Esophagus muscularis mucosa (tissue), 4 donors: ENCODE measurements at regions of chr2 and their contacts with region 1.

Region 1: GRCh38 chr2:180125245-180125962 is 118.3 kb upstream of the CWC22 start:
- DNase-seq: no peak
- H3K4me3 ChIP-seq: no peak overlapping the region
- H3K27ac ChIP-seq: no peak overlapping the region
- H3K4me1 ChIP-seq: peaks cover 0 to 16% (median 11%) of the 10 kb centered on the region in 4 donors
- H3K27me3 ChIP-seq: no peaks in the 10 kb centered on the region
- CTCF ChIP-seq: peak; percentile 53 to 65 (median 57)
- EP300 ChIP-seq: no peak
- POLR2A ChIP-seq: no peak

Region 2: DNA sequence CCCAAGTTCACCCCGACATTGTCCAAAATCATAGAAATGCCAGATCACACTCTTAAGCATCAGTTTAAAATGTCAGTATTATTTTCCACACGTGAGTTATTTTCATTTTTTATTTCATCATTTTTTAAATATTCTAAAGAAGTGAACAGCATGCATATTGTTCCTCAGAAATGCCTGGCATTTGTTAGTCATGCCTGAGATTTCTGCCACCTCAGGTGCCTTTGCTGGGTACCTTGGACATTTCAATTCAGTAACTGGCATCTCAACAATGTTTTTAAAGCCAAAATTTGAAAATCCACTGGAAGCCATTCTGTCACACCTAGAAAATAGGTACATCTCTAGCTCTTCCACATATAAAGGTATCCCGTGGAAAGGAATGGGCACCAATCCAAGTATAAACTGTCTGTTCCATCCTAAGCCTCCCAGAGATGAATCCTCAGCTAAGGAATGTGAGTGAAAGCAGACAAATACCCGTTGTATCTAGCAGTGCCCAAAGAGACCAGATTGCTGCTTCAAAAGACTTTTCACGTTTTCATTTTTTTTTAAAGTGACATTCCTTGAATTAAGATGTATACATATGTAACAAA is 423.8 kb before region 1 on chr2:
- intact Hi-C with region 1: no loop called
- DNase-seq: no peak
- H3K4me3 ChIP-seq: no peak overlapping the region
- H3K27ac ChIP-seq: no peak overlapping the region
- H3K4me1 ChIP-seq: peaks cover 0 to 8% (median 4%) of the 10 kb centered on the region in 4 donors
- H3K27me3 ChIP-seq: no peaks in the 10 kb centered on the region
- CTCF ChIP-seq: no peak
- EP300 ChIP-seq: no peak
- POLR2A ChIP-seq: no peak

Region 3: GRCh38 chr2:179917272-179917671 is 208.1 kb before region 1 on chr2:
- intact Hi-C with region 1: no loop called
- DNase-seq: no peak
- H3K4me3 ChIP-seq: no peak overlapping the region
- H3K27ac ChIP-seq: no peak overlapping the region
- H3K4me1 ChIP-seq: peaks cover 0 to 5% (median 0%) of the 10 kb centered on the region in 4 donors
- H3K27me3 ChIP-seq: no peaks in the 10 kb centered on the region
- CTCF ChIP-seq: no peak
- EP300 ChIP-seq: no peak
- POLR2A ChIP-seq: no peak

Region 4: DNA sequence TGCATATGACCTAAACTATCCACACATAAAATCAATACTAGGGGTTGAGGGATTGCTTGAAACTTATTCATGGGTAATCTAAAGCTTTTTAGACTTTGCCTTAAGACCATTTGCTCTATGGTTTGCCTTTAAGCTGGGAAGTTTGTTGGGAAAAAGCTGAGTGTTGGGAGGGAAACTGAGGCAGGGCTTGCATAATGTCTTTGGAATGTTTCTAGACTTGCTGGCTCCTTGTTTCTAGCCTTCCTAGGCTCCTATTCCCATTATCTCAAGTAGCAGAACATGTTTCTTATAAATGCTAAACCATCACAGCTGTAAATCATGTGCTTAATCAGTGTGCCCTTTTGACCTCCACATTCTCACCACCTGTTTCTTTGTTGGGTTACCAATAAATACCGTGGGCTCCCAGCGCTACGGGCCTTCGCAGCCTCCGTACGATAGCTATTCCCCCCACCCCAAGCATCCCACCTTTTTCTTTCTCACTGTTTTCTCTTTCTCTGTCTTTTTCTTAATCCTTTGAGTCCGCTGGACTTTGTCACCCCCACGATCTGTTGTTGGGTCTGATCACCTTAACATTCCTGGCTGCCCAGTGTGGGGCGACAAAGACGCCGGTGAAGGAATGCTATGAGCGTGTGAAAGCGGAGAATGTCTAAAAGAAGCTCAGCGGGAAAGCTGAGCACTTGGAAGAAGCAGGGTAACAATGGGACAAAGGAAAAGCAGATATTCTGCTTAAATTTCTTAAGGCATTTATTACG is 68.9 kb before region 1 on chr2:
- intact Hi-C with region 1: no loop called
- DNase-seq: no peak
- H3K4me3 ChIP-seq: no peak overlapping the region
- H3K27ac ChIP-seq: no peak overlapping the region
- H3K4me1 ChIP-seq: no peaks in the 10 kb centered on the region
- H3K27me3 ChIP-seq: no peaks in the 10 kb centered on the region
- CTCF ChIP-seq: no peak
- EP300 ChIP-seq: no peak
- POLR2A ChIP-seq: no peak

Region 5: GRCh38 chr2:180980106-180980942 is 854.9 kb after region 1 on chr2 and contains the start of gene UBE2E3:
- intact Hi-C with region 1: loop called (anchors 5 kb)
- DNase-seq: peak; percentile 94
- H3K4me3 ChIP-seq: peak within 1 kb of the TSS; percentile 77 to 86 (median 82)
- H3K27ac ChIP-seq: peak within 1 kb of the TSS; percentile 92 to 94 (median 92)
- H3K4me1 ChIP-seq: peaks cover 41 to 48% (median 47%) of the 10 kb centered on the region in 4 donors
- H3K27me3 ChIP-seq: no peaks in the 10 kb centered on the region
- CTCF ChIP-seq: peak; percentile 71 to 87 (median 74)
- EP300 ChIP-seq: no peak
- POLR2A ChIP-seq: no peak
- total RNA-seq, gene UBE2E3: 32.8 to 57.7 (median 40.2) TPM

Region 6: GRCh38 chr2:181077128-181077709 is 951.8 kb after region 1 on chr2:
- intact Hi-C with region 1: loop called (anchors 10 kb)
- DNase-seq: no peak
- H3K4me3 ChIP-seq: no peak overlapping the region
- H3K27ac ChIP-seq: no peak overlapping the region
- H3K4me1 ChIP-seq: peaks cover 0 to 5% (median 0%) of the 10 kb centered on the region in 4 donors
- H3K27me3 ChIP-seq: no peaks in the 10 kb centered on the region
- CTCF ChIP-seq: peak; percentile 57 to 70 (median 63)
- EP300 ChIP-seq: no peak
- POLR2A ChIP-seq: no peak

Region 7: GRCh38 chr2:181466661-181467576 is 1341.5 kb after region 1 on chr2:
- intact Hi-C with region 1: loop called (anchors 5 kb)
- DNase-seq: no peak
- H3K4me3 ChIP-seq: no peak overlapping the region
- H3K27ac ChIP-seq: no peak overlapping the region
- H3K4me1 ChIP-seq: no peaks in the 10 kb centered on the region
- H3K27me3 ChIP-seq: no peaks in the 10 kb centered on the region
- CTCF ChIP-seq: peak; percentile 53 to 77 (median 69)
- EP300 ChIP-seq: no peak
- POLR2A ChIP-seq: no peak

Region 8: GRCh38 chr2:181715033-181715630 is 1589.7 kb after region 1 on chr2:
- intact Hi-C with region 1: loop called (anchors 5 kb)
- DNase-seq: no peak
- H3K4me3 ChIP-seq: no peak overlapping the region
- H3K27ac ChIP-seq: no peak overlapping the region
- H3K4me1 ChIP-seq: no peaks in the 10 kb centered on the region
- H3K27me3 ChIP-seq: no peaks in the 10 kb centered on the region
- CTCF ChIP-seq: peak; percentile 57 to 62 (median 60)
- EP300 ChIP-seq: no peak
- POLR2A ChIP-seq: no peak